A549 (cell line): ENCODE measurements at regions of chr20 and their contacts with region 1.

Region 1: DNA sequence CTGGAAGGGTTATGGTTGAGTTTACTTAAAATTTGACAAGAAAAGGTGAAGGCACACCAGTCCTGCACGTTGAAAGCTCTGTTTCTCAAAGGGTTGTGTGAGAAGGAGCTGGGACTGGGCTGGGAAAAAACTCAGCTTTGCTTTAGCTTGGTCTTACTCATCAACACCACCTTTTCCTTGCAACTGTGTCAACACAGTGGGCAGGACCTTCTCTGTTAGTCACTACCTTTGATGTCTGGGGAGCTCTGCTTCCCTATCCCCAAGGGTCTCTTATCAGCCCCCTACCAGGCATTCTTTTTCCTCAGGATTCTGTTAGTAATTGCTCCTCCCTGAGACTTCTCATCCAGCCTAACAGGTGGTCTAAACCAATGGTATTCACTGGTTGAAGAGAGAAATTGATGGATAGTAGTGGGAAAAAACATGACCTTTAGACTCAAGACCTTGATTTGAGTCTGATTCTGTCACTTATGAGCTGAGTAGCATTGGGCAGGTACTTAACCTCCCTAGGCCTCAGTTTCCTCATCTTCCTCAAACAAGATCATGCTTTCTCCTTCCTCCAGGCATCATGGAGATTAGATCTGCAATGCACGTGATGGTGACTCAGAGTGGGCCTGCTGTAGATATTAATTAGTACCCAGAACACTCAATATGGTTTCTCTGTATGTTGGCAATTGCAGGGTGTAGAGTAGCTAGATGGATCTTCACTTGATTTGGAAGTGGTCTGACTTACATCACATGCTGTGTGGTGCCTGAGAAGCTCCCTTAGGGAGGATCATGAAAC is 17.2 kb upstream of the FOXA2 start:
- DNase-seq: peak; percentile 51 to 70
- ATAC-seq: peak; percentile 87 to 89
- H3K4me3 ChIP-seq: no peak overlapping the region
- H3K27ac ChIP-seq: peak overlapping the region; percentile 50 to 56; a peak in 5 of 6 replicates
- H3K4me1 ChIP-seq: peaks cover 22% of the 10 kb centered on the region
- CTCF ChIP-seq: no peak
- EP300 ChIP-seq: no peak
- POLR2A ChIP-seq: no peak
- RAD21 ChIP-seq: no peak

Region 2: GRCh38 chr20:22567944-22568871 is 33.3 kb before region 1 on chr20:
- CTCF ChIA-PET with region 1: no interaction called
- POLR2A ChIA-PET with region 1: no interaction called
- DNase-seq: no peak
- ATAC-seq: no peak
- H3K4me3 ChIP-seq: no peak overlapping the region
- H3K27ac ChIP-seq: peak overlapping the region in 1 of 2 experiments; percentile 38; a peak in 3 of 6 replicates
- H3K4me1 ChIP-seq: peaks cover 9% of the 10 kb centered on the region; the same call in 1 of the 3 replicates
- CTCF ChIP-seq: no peak
- EP300 ChIP-seq: no peak
- POLR2A ChIP-seq: no peak
- RAD21 ChIP-seq: no peak

Region 3: GRCh38 chr20:22617160-22617559 is 15.6 kb after region 1 on chr20:
- CTCF ChIA-PET with region 1: interaction called, 7 read pairs
- POLR2A ChIA-PET with region 1: interaction called, 10 read pairs
- DNase-seq: peak; percentile 80 to 84
- ATAC-seq: peak; percentile 95 to 99
- H3K4me3 ChIP-seq: no peak overlapping the region
- H3K27ac ChIP-seq: peak overlapping the region in 1 of 2 experiments; percentile 27; a peak in 3 of 6 replicates
- H3K4me1 ChIP-seq: peaks cover 25% of the 10 kb centered on the region
- CTCF ChIP-seq: no peak
- EP300 ChIP-seq: no peak
- POLR2A ChIP-seq: no peak; the same call in 1 of the 2 replicates
- RAD21 ChIP-seq: no peak

Region 4: GRCh38 chr20:22684072-22684762 is 82.7 kb after region 1 on chr20:
- CTCF ChIA-PET with region 1: interaction called, 32 read pairs
- POLR2A ChIA-PET with region 1: no interaction called
- DNase-seq: peak; percentile 71 to 85
- ATAC-seq: peak; percentile 76 to 92
- H3K4me3 ChIP-seq: no peak overlapping the region
- H3K27ac ChIP-seq: peak overlapping the region; percentile 41 to 66; a peak in 5 of 6 replicates
- H3K4me1 ChIP-seq: peaks cover 30% of the 10 kb centered on the region
- CTCF ChIP-seq: peak; percentile 98
- EP300 ChIP-seq: no peak
- POLR2A ChIP-seq: no peak
- RAD21 ChIP-seq: peak; percentile 100